ENCODE measurements at regions of chr5 and their contacts with region 1.

Region 1: DNA sequence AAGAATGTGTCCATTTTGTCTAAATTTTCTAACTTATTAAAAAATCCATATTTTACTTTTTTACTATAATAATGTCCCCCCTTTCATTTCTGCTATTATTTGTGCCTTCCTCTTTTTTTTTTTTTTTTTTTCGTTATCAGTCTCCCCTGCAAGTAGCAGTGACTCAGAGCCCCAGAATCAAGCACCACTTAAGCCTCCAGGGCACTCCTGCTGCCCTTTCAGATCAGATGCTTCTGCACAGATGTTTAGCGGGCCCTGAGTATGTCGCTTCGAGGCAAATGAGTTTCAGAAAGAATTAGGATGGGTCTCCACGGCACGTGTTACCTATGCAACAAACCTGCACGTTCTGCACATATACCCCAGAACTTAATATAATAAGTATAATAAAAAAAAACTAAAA is 11.7 kb downstream of the MED7 start:
- DNase-seq: no peak
- ATAC-seq: no peak
- H3K4me3 ChIP-seq: no peak overlapping the region
- H3K4me3 Mint-ChIP-seq: no peak overlapping the region
- H3K27ac ChIP-seq: no peak overlapping the region
- H3K27ac Mint-ChIP-seq: no peak overlapping the region
- H3K4me1 ChIP-seq: peaks cover 2 to 5% of the 10 kb centered on the region in 2 experiments
- H3K4me1 Mint-ChIP-seq: peaks cover 17 to 26% (median 25%) of the 10 kb centered on the region in 3 donors
- H3K27me3 ChIP-seq: no peaks in the 10 kb centered on the region
- H3K27me3 Mint-ChIP-seq: no peaks in the 10 kb centered on the region

Region 2: GRCh38 chr5:155943516-155944407 is 1187.2 kb before region 1 on chr5:
- CTCF ChIA-PET with region 1: interaction called, 4 to 23 read pairs
- POLR2A ChIA-PET with region 1: no interaction called
- DNase-seq: peak in 26 of 35 experiments; percentile 2 to 58 (median 17)
- ATAC-seq: peak in 2 of 4 experiments; percentile 56 to 61
- H3K4me3 ChIP-seq: no peak overlapping the region
- H3K4me3 Mint-ChIP-seq: no peak overlapping the region
- H3K27ac ChIP-seq: no peak overlapping the region
- H3K27ac Mint-ChIP-seq: no peak overlapping the region
- H3K4me1 ChIP-seq: no peaks in the 10 kb centered on the region
- H3K4me1 Mint-ChIP-seq: peaks cover 0 to 5% (median 0%) of the 10 kb centered on the region in 3 donors
- H3K27me3 ChIP-seq: no peaks in the 10 kb centered on the region
- H3K27me3 Mint-ChIP-seq: peaks cover 11 to 16% of the 10 kb centered on the region in 2 donors

Region 3: DNA sequence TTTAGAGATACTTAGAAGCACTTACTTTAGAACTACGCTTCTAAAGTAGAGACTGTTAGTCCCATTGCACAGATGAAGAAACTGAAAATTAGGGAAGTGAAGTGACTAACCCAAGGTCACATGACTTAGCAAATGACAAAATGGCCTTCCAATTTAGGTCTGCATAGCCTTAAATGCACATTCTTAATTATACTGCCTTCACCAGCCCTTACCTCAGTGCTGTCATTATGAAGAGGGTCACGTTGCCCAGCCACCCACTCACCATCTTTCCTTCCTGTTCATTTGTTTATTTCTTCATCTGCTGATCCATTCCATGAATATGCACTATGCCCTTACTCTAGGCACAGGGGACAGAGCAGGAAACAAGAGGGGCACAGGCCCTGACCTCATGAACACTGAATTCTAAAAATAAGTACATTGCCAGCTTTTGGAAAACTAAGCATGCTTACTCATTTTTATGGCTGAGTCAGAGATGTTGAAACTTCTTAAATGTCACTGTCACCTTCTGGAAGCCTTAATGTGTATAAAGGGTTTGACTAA is 30.7 kb before region 1 on chr5:
- CTCF ChIA-PET with region 1: no interaction called
- POLR2A ChIA-PET with region 1: no interaction called
- DNase-seq: no peak
- ATAC-seq: no peak
- H3K4me3 ChIP-seq: no peak overlapping the region
- H3K4me3 Mint-ChIP-seq: no peak overlapping the region
- H3K27ac ChIP-seq: no peak overlapping the region
- H3K27ac Mint-ChIP-seq: no peak overlapping the region
- H3K4me1 ChIP-seq: no peaks in the 10 kb centered on the region
- H3K4me1 Mint-ChIP-seq: peaks cover 0 to 6% (median 6%) of the 10 kb centered on the region in 3 donors
- H3K27me3 ChIP-seq: no peaks in the 10 kb centered on the region
- H3K27me3 Mint-ChIP-seq: no peaks in the 10 kb centered on the region

Region 4: DNA sequence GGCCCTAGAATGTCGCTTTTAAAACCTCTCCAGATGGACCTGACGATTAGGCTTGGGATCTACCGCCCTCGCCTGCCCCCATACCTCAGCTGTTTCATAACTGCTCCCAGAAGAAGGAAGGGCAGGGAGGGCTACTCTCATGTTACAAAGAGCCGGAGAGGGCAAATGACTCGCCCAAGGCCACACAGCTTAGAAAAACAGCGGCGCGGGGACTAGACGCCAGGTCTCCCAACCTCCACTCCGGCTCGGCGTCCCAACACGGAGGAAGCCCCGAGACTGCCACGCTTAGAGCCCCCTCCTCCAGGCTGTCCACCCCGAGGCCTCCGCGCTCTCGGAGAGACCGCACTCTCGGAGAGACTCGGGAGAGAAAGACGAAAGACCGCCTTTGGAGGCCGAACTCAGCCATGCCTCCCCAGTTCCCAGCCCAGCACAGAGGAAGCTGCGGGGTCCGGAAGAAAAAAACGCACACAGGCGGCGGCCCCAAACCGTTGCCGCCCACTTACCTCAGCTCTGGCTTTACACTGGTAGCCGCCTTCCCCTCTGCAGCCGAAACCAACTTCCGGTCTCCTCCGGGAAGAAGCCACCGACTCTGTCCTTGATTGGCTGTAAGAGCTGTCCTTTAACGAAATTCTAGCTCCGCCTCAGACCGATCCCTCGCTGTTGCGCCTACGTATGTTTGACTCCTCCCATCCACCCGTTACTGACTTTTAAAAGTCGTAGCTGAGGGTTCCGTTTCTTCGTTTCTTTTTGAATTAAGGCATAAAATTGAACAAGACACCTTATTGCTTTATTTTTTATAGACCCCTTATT is 11.6 kb after region 1 on chr5 and contains the start of gene MED7:
- CTCF ChIA-PET with region 1: interaction called, 3 to 15 read pairs
- POLR2A ChIA-PET with region 1: interaction called in 1 of 2 experiments, 3 read pairs
- DNase-seq: peak; percentile 68 to 99 (median 93)
- ATAC-seq: peak; percentile 96 to 98 (median 96)
- H3K4me3 ChIP-seq: peak within 1 kb of the TSS; percentile 93 to 98
- H3K4me3 Mint-ChIP-seq: peak within 1 kb of the TSS; percentile 84 to 97 (median 95)
- H3K27ac ChIP-seq: peak within 1 kb of the TSS; percentile 92
- H3K27ac Mint-ChIP-seq: peak within 1 kb of the TSS; percentile 99
- H3K4me1 ChIP-seq: peaks cover 15 to 30% of the 10 kb centered on the region in 2 experiments
- H3K4me1 Mint-ChIP-seq: peaks cover 32 to 54% (median 50%) of the 10 kb centered on the region in 3 donors
- H3K27me3 ChIP-seq: no peaks in the 10 kb centered on the region
- H3K27me3 Mint-ChIP-seq: no peaks in the 10 kb centered on the region
- total RNA-seq, gene MED7: 5.7 to 14.9 (median 13.1) TPM

Region 5: GRCh38 chr5:157189223-157189622 is 58.3 kb after region 1 on chr5:
- CTCF ChIA-PET with region 1: no interaction called
- POLR2A ChIA-PET with region 1: no interaction called
- DNase-seq: no peak
- ATAC-seq: peak in 1 of 4 experiments; percentile 8
- H3K4me3 ChIP-seq: peak overlapping the region in 1 of 2 donors; percentile 40
- H3K4me3 Mint-ChIP-seq: peak overlapping the region; percentile 81 to 100 (median 99)
- H3K27ac ChIP-seq: peak overlapping the region; percentile 88
- H3K27ac Mint-ChIP-seq: peak overlapping the region; percentile 94 to 96
- H3K4me1 ChIP-seq: peaks cover 74 to 80% of the 10 kb centered on the region in 2 experiments
- H3K4me1 Mint-ChIP-seq: peaks cover 86 to 98% (median 89%) of the 10 kb centered on the region in 3 donors
- H3K27me3 ChIP-seq: no peaks in the 10 kb centered on the region
- H3K27me3 Mint-ChIP-seq: no peaks in the 10 kb centered on the region

Region 6: DNA sequence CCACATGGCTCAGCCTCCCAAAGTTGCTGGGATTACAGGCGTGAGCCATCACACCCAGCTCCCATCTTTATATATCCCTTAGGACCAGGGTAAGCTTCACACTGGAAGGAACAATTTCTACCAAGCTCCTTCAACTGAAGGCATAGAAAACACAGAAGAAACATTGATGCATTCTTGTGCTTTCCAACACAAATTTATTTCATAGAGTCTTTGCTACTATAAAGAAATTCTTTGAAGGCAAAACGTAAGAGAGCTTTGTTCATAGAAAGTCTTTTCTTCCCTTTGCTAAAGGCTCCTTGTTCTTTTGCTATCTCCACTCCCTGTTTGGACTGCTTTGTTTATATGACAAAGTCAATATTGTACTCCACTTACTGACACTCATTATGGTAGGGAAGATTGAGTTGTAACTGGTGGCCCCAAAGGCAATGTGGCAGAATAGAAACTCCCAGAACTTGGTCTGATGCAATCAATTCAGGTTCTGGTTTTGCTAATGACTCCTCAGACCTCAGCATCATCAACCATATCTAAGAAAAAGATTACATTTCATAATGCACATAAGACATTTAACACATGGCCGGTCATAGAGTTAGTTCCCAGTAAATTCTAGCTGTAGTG is 825.5 kb after region 1 on chr5:
- CTCF ChIA-PET with region 1: interaction called in 1 of 2 experiments, 14 read pairs
- POLR2A ChIA-PET with region 1: no interaction called
- DNase-seq: no peak
- ATAC-seq: no peak
- H3K4me3 ChIP-seq: no peak overlapping the region
- H3K4me3 Mint-ChIP-seq: no peak overlapping the region
- H3K27ac ChIP-seq: no peak overlapping the region
- H3K27ac Mint-ChIP-seq: no peak overlapping the region
- H3K4me1 ChIP-seq: no peaks in the 10 kb centered on the region
- H3K4me1 Mint-ChIP-seq: no peaks in the 10 kb centered on the region
- H3K27me3 ChIP-seq: peaks cover 0 to 9% of the 10 kb centered on the region in 2 experiments
- H3K27me3 Mint-ChIP-seq: peaks cover 4 to 13% of the 10 kb centered on the region in 2 donors

Region 7: DNA sequence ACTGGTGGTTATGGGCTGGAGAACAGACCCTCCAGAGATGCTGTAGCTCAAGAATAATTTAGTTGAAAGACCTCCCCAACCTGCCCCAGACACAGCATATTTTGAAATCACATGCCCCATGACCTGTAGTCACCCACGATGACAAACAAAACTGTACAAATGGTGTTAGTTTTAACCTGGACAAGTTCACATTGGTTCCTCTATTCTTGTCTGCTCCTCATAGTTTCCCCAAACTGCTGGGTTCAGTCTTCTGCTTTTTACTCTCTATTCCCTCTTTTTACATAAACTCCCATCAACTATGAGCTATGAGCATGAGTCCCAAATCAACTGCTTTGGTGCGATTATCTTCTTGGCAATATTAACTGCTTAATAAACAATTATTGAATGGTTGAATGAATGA is 1093.3 kb after region 1 on chr5:
- CTCF ChIA-PET with region 1: no interaction called
- POLR2A ChIA-PET with region 1: interaction called in 1 of 2 experiments, 10 read pairs
- DNase-seq: no peak
- ATAC-seq: no peak
- H3K4me3 ChIP-seq: no peak overlapping the region
- H3K4me3 Mint-ChIP-seq: no peak overlapping the region
- H3K27ac ChIP-seq: no peak overlapping the region
- H3K27ac Mint-ChIP-seq: no peak overlapping the region
- H3K4me1 ChIP-seq: no peaks in the 10 kb centered on the region
- H3K4me1 Mint-ChIP-seq: no peaks in the 10 kb centered on the region
- H3K27me3 ChIP-seq: no peaks in the 10 kb centered on the region
- H3K27me3 Mint-ChIP-seq: peaks cover 0 to 13% of the 10 kb centered on the region in 2 donors